PC-9 (cell line): ENCODE measurements at regions of chr4 and their contacts with region 1.

Region 1: DNA sequence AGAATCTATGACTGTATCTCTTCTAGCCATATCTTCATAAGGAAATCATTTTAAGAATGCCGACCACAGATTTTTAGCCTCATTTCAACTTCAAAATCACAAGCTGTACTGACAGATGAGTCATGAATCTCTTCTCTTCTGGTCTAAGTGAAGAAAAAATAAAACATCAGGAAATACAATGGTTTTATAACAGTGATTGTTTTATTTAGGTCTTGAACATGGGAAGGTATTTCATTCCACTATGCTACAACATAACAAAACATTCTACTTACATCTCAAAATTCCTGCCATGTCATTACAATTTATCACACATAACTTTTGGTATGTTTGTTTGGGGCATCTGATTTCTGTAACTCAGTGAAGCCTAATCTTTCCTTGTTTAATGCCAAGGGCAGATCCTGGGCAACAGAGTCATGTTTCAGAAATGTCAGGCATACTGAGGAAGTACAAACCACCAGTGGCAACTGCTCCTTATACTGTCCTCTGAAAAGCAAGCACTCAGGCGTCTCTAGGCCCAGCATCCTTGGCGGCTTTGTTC is 325.0 kb downstream of the PDHA2 start:
- DNase-seq: peak in 1 of 2 experiments; percentile 29
- H3K4me3 ChIP-seq: no peak overlapping the region
- H3K27ac ChIP-seq: no peak overlapping the region
- H3K4me1 ChIP-seq: no peaks in the 10 kb centered on the region
- H3K27me3 ChIP-seq: no peaks in the 10 kb centered on the region
- CTCF ChIP-seq: no peak

Region 2: GRCh38 chr4:96366632-96367031 is 201.7 kb after region 1 on chr4:
- CTCF ChIA-PET with region 1: no interaction called
- POLR2A ChIA-PET with region 1: interaction called, 10 read pairs
- intact Hi-C with region 1: no loop called
- DNase-seq: no peak
- H3K4me3 ChIP-seq: no peak overlapping the region
- H3K27ac ChIP-seq: no peak overlapping the region
- H3K4me1 ChIP-seq: no peaks in the 10 kb centered on the region
- H3K27me3 ChIP-seq: no peaks in the 10 kb centered on the region
- CTCF ChIP-seq: no peak